ENCODE measurements at regions of chr18 and their contacts with region 1.

Region 1: GRCh38 chr18:58493516-58494253 is 135.2 kb downstream of the ALPK2 start:
- DNase-seq: no peak
- ATAC-seq: peak; percentile 91

Region 2: DNA sequence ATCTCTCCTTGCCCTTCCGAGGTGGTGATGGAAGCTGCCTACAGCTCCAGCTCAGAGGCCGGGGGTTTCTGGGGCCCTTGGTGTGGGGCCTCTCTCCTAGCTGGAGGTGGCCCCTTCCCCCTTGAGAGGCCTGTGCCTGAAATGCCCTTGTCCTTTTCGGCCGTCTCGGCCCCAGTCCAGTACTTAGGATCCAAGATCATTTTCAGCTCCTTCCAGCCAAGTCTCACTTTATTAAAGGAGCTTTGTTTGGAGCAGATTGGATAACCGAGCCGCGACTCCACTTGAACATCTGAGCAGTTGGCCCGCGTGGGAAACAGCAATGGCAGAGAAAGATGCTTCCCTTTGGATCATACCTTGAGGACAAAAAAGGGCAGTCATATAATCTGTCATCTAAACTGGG is 324.7 kb before region 1 on chr18:
- intact Hi-C with region 1: no loop called
- DNase-seq: no peak
- ATAC-seq: no peak

Region 3: GRCh38 chr18:58180738-58181353 is 312.8 kb before region 1 on chr18:
- intact Hi-C with region 1: loop called (anchors 10 kb)
- DNase-seq: no peak
- ATAC-seq: no peak

Region 4: GRCh38 chr18:58344861-58345463 is 148.7 kb before region 1 on chr18:
- intact Hi-C with region 1: loop called (anchors 5 kb)
- DNase-seq: no peak
- ATAC-seq: no peak

Region 5: GRCh38 chr18:58402247-58402646 is 91.4 kb before region 1 on chr18:
- intact Hi-C with region 1: loop called (anchors 1 kb)
- DNase-seq: no peak
- ATAC-seq: peak; percentile 18

Region 6: DNA sequence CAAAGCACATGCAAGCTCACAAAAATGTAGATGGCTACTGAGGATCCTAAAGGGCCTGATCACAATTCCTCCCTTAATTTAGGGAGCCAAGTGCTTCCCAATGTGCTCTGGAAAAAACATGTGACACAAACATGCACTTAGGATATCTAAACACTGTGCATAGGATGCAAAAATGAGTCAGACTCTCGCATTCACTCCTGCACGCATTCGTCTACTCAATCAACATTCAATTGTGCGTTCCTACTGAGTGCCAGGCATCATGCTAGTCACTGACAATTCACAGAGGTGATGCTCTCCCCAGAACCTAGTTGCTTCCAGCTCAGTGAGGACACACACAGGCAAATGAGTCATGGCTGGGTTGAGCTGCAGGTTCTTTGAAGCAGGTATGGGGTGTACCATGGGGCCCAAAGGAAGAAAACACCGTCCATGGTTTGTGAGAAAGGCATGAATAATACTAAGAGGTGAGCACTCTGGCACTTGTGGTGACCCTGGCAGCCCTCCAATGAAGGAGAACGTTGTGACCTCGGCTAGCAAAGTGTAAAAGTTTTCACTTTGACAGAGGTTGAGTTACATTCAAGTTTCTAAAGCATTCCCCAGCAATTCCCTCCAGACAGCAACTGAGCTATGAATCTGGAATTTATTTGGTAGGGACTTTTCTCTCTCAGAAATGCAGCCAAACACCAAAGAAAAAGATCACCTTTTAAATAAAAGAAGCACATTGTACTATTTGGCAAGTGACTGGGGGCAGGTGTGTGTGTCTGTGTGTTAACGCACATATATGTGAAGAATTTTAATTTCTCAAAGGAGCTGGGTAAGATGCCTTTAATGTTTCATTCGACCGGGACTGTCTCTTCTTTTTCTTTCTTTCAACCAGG is 38.1 kb before region 1 on chr18:
- intact Hi-C with region 1: loop called (anchors 5 kb)
- DNase-seq: no peak
- ATAC-seq: no peak

Region 7: DNA sequence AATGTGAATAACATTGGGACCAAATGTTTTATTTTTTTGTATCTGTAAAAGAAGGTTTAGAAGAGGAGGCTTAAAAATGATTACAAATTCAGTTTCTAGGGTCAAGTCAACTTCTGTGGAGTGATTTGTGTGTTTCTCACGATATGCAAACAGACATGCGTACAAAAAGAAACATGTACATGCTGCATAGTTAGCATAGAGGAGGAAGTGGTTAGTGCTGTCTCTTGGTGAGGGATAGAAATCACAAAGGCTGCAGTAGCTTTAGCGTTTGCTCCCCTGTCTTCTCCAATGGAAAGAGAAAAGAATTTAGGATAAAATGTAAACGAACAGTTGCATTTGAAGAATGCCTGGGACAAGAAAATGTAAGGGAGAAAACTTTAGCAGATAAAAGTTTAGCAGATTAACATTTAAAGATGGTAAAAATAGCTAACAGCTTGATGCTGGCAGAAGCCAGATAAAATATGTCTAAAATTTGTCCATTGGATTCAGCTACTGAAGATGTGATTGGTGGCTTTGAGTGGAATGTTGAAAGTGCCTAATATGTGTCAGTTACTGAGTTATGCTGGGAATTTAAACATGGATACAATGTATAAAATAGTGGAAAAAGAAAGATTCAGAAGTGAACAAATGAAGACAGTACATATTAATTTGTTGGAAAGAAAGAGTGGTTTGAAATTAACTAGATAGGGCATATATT is 222.5 kb after region 1 on chr18:
- intact Hi-C with region 1: no loop called
- DNase-seq: no peak
- ATAC-seq: no peak